CD4-positive, alpha-beta T cell (primary cell): ENCODE measurements at regions of chr4 and their contacts with region 1.

Region 1: GRCh38 chr4:76213415-76214176 is at the start of gene SCARB2:
- DNase-seq: peak; percentile 40 to 92 (median 66)
- ATAC-seq: peak; percentile 61
- H3K4me3 ChIP-seq: peak within 1 kb of the TSS; percentile 83
- H3K4me3 Mint-ChIP-seq: peak within 1 kb of the TSS; percentile 92
- H3K27ac ChIP-seq: peak within 1 kb of the TSS; percentile 76 to 82
- H3K27ac Mint-ChIP-seq: peak within 1 kb of the TSS; percentile 95
- H3K4me1 ChIP-seq: peaks cover 44% of the 10 kb centered on the region
- H3K4me1 Mint-ChIP-seq: peaks cover 56% of the 10 kb centered on the region
- H3K27me3 ChIP-seq: no peaks in the 10 kb centered on the region
- H3K27me3 Mint-ChIP-seq: no peaks in the 10 kb centered on the region
- CTCF ChIP-seq: no peak
- total RNA-seq, gene SCARB2: 34.4 to 36.0 TPM

Region 2: GRCh38 chr4:75630174-75630936 is 583.2 kb before region 1 on chr4 and contains the start of gene CDKL2:
- CTCF ChIA-PET with region 1: no interaction called
- POLR2A ChIA-PET with region 1: no interaction called
- intact Hi-C with region 1: loop called in 1 of 2 experiments (anchors 10 kb)
- DNase-seq: peak; percentile 88 to 96 (median 92)
- ATAC-seq: peak; percentile 99
- H3K4me3 ChIP-seq: peak within 1 kb of the TSS; percentile 85
- H3K4me3 Mint-ChIP-seq: peak within 1 kb of the TSS; percentile 90
- H3K27ac ChIP-seq: peak within 1 kb of the TSS in 1 of 2 donors; percentile 48
- H3K27ac Mint-ChIP-seq: peak within 1 kb of the TSS; percentile 75
- H3K4me1 ChIP-seq: peaks cover 16% of the 10 kb centered on the region
- H3K4me1 Mint-ChIP-seq: peaks cover 12% of the 10 kb centered on the region
- H3K27me3 ChIP-seq: no peaks in the 10 kb centered on the region
- H3K27me3 Mint-ChIP-seq: no peaks in the 10 kb centered on the region
- CTCF ChIP-seq: no peak
- total RNA-seq, gene CDKL2: 0.38 to 0.92 TPM

Region 3: GRCh38 chr4:75919920-75920319 is 293.7 kb before region 1 on chr4:
- CTCF ChIA-PET with region 1: no interaction called
- POLR2A ChIA-PET with region 1: no interaction called
- intact Hi-C with region 1: no loop called
- DNase-seq: no peak
- ATAC-seq: no peak
- H3K4me3 ChIP-seq: no peak overlapping the region
- H3K4me3 Mint-ChIP-seq: no peak overlapping the region
- H3K27ac ChIP-seq: no peak overlapping the region
- H3K27ac Mint-ChIP-seq: no peak overlapping the region
- H3K4me1 ChIP-seq: no peaks in the 10 kb centered on the region
- H3K4me1 Mint-ChIP-seq: no peaks in the 10 kb centered on the region
- H3K27me3 ChIP-seq: no peaks in the 10 kb centered on the region
- H3K27me3 Mint-ChIP-seq: no peaks in the 10 kb centered on the region
- CTCF ChIP-seq: no peak

Region 4: GRCh38 chr4:75989846-75990528 is 223.6 kb before region 1 on chr4:
- CTCF ChIA-PET with region 1: no interaction called
- POLR2A ChIA-PET with region 1: interaction called, 9 read pairs
- intact Hi-C with region 1: loop called in 1 of 2 experiments (anchors 5 kb)
- DNase-seq: peak in 3 of 14 experiments; percentile 10 to 23 (median 21)
- ATAC-seq: no peak
- H3K4me3 ChIP-seq: peak overlapping the region; percentile 95
- H3K4me3 Mint-ChIP-seq: peak overlapping the region; percentile 99
- H3K27ac ChIP-seq: peak overlapping the region; percentile 37 to 52
- H3K27ac Mint-ChIP-seq: peak overlapping the region; percentile 93
- H3K4me1 ChIP-seq: peaks cover 40% of the 10 kb centered on the region
- H3K4me1 Mint-ChIP-seq: peaks cover 42% of the 10 kb centered on the region
- H3K27me3 ChIP-seq: no peaks in the 10 kb centered on the region
- H3K27me3 Mint-ChIP-seq: no peaks in the 10 kb centered on the region
- CTCF ChIP-seq: no peak

Region 5: DNA sequence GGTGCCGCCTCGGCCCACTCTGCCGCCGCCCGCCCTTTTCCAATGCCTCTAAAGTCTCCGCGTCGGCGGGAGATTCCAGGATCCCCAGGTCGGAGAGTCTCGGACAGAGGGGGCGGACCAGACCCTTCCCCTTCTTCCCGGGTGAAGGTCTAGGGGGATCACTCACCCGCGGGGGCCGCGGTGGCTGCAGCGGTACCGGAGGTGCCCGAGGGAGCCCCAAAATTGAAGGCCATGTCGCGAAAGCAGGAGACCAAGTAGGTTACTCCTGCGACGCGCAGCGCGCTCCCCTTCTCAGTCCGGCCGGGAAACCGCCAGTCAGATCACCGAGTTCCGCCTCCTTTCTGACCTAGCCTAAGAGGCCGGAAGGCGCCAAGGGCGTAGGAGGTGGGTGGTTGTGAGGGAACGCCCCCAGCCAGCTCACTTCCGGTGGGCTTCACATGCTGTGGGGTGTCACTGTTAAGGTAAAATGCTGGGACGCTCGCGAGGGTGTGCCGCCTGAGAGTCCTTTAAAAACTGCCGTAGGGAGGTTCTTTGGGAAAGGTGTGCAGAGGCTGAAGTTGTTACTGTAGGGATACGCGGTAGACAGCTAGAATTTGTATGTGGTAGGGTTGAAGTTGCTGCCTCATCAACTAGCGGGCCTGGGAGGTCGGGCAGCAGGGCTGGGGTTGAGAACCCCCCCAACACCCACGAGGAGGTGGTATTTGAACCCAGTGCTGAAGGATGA is 65.3 kb before region 1 on chr4 and contains the start of gene NUP54:
- CTCF ChIA-PET with region 1: no interaction called
- POLR2A ChIA-PET with region 1: interaction called, 18 read pairs
- intact Hi-C with region 1: loop called (anchors 2 kb)
- DNase-seq: peak; percentile 90 to 97 (median 93)
- ATAC-seq: peak; percentile 97
- H3K4me3 ChIP-seq: peak within 1 kb of the TSS; percentile 95
- H3K4me3 Mint-ChIP-seq: peak within 1 kb of the TSS; percentile 99
- H3K27ac ChIP-seq: peak within 1 kb of the TSS; percentile 80 to 90
- H3K27ac Mint-ChIP-seq: peak within 1 kb of the TSS; percentile 92
- H3K4me1 ChIP-seq: peaks cover 15% of the 10 kb centered on the region
- H3K4me1 Mint-ChIP-seq: peaks cover 38% of the 10 kb centered on the region
- H3K27me3 ChIP-seq: no peaks in the 10 kb centered on the region
- H3K27me3 Mint-ChIP-seq: no peaks in the 10 kb centered on the region
- CTCF ChIP-seq: no peak
- total RNA-seq, gene NUP54: 94.1 to 108 TPM

Region 6: DNA sequence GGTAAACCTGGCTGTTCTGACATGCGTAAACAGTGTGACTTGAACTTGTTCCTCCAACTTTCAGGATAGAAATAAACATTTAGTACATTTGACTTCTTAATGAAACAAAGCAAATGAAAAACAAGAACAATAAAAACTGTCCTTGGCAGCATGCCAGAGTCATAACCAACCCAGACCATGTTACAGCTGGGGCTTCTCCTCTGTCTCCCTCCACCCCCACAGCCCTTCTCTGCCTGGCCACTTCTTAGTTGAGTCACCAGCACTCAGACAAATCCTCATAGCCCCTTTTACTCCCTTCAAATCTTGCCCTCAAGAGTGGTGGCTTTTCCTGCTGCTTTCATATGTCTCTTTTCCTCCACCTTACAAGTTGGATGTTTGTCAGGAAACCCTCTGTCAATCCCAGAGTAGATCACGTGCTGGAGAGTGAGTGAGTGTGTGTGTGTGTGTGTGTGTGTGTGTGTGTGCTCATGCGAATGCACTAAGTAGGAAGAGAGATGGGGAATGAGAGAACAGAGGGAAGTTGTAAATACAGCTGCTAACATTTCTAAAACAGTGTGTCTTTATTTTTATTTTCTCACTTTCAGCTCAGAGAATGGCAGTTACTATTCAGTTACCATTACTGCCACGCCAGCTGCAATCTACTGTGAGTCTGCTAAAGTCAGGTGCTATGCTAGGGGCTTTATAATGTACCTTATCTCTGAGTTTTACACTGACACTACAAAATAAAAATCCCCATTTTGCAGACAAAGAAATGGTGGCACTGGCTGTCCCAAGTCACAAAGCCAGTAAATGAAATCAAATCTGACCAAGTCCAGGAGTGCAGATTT is 15.0 kb before region 1 on chr4:
- CTCF ChIA-PET with region 1: interaction called, 4 read pairs
- POLR2A ChIA-PET with region 1: interaction called, 7 read pairs
- intact Hi-C with region 1: loop called in 1 of 2 experiments (anchors 2 kb)
- DNase-seq: peak in 5 of 14 experiments; percentile 3 to 62 (median 38)
- ATAC-seq: no peak
- H3K4me3 ChIP-seq: no peak overlapping the region
- H3K4me3 Mint-ChIP-seq: peak overlapping the region; percentile 3
- H3K27ac ChIP-seq: no peak overlapping the region
- H3K27ac Mint-ChIP-seq: peak overlapping the region; percentile 63
- H3K4me1 ChIP-seq: peaks cover 22% of the 10 kb centered on the region
- H3K4me1 Mint-ChIP-seq: peaks cover 57% of the 10 kb centered on the region
- H3K27me3 ChIP-seq: no peaks in the 10 kb centered on the region
- H3K27me3 Mint-ChIP-seq: no peaks in the 10 kb centered on the region
- CTCF ChIP-seq: no peak

Region 7: GRCh38 chr4:76504613-76505465 is 291.2 kb after region 1 on chr4:
- CTCF ChIA-PET with region 1: no interaction called
- POLR2A ChIA-PET with region 1: no interaction called
- intact Hi-C with region 1: no loop called
- DNase-seq: peak in 3 of 14 experiments; percentile 43 to 57 (median 46)
- ATAC-seq: no peak
- H3K4me3 ChIP-seq: no peak overlapping the region
- H3K4me3 Mint-ChIP-seq: no peak overlapping the region
- H3K27ac ChIP-seq: no peak overlapping the region
- H3K27ac Mint-ChIP-seq: no peak overlapping the region
- H3K4me1 ChIP-seq: no peaks in the 10 kb centered on the region
- H3K4me1 Mint-ChIP-seq: no peaks in the 10 kb centered on the region
- H3K27me3 ChIP-seq: peaks cover 0 to 8% of the 10 kb centered on the region in 2 experiments
- H3K27me3 Mint-ChIP-seq: peaks cover 8% of the 10 kb centered on the region
- CTCF ChIP-seq: peak; percentile 55

Region 8: DNA sequence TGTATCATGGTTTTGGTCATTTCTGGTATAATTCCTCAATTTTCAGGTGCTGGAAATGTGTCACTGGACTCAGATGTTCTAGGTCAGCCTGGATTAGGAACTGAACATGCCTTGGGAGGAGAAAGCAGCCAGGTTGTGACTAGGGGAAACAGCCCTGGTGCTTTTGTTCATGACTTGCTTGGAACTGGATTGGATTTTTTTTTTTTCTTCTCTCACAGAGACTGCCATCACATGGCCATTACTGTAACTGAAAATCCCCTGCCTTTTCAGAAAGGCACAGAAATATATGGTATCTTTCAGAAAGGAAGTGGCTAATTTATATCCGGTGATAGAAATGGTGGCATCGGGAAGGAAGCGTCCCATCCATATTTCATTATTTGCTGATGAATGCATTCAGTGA is 770.5 kb after region 1 on chr4:
- CTCF ChIA-PET with region 1: no interaction called
- POLR2A ChIA-PET with region 1: no interaction called
- intact Hi-C with region 1: loop called in 1 of 2 experiments (anchors 10 kb)
- DNase-seq: peak in 3 of 14 experiments; percentile 67 to 78 (median 67)
- ATAC-seq: peak; percentile 75
- H3K4me3 ChIP-seq: no peak overlapping the region
- H3K4me3 Mint-ChIP-seq: peak overlapping the region; percentile 4
- H3K27ac ChIP-seq: no peak overlapping the region
- H3K27ac Mint-ChIP-seq: peak overlapping the region; percentile 24
- H3K4me1 ChIP-seq: peaks cover 52% of the 10 kb centered on the region
- H3K4me1 Mint-ChIP-seq: peaks cover 94% of the 10 kb centered on the region
- H3K27me3 ChIP-seq: no peaks in the 10 kb centered on the region
- H3K27me3 Mint-ChIP-seq: no peaks in the 10 kb centered on the region
- CTCF ChIP-seq: peak; percentile 41